Activated CD4-positive, alpha-beta memory T cell treated with anti-CD3 and anti-CD28 coated beads for 36 hours (primary cell): ENCODE measurements at regions of chr1 and their contacts with region 1.

Region 1: DNA sequence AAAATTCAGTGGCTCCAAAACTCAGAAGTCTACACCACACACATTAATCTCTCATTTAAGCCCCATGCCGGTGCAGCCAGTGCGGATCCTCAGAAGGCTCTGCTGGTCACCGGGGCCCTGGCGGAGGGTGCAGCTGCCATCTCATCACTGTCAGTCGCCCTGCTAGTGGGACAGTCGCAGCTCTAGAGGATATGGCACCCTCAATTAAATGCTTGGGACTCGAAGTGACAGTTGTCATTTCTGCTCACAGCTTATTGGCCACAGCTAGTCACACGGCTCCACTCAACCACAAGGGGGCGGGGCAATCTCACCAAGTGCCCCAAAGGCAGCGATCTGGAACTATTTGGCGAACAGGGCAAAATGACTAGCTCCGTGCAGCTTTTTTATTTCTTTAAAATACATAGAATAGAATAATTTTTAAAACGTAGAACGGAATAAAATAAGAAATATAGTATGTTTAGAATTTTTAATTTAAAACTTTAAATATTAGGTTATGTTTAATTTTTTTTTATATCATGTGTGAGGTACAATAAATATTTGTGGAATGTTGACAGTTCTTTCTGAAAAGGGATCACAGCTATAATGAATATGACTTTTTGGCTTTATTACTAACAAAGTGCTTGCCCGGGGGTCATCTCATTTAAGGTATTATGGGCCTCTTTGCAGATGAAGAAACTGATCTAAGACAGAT is 8.0 kb upstream of the MAN1C1 start:
- DNase-seq: peak; percentile 93
- H3K4me3 Mint-ChIP-seq: no peak overlapping the region
- H3K27ac Mint-ChIP-seq: no peak overlapping the region
- H3K4me1 Mint-ChIP-seq: peaks cover 6% of the 10 kb centered on the region
- H3K27me3 Mint-ChIP-seq: peaks cover 1% of the 10 kb centered on the region

Region 2: GRCh38 chr1:25435397-25436108 is 173.1 kb before region 1 on chr1:
- CTCF ChIA-PET with region 1: no interaction called
- POLR2A ChIA-PET with region 1: no interaction called
- intact Hi-C with region 1: no loop called
- DNase-seq: peak; percentile 13
- H3K4me3 Mint-ChIP-seq: peak overlapping the region; percentile 51
- H3K27ac Mint-ChIP-seq: peak overlapping the region; percentile 57
- H3K4me1 Mint-ChIP-seq: peaks cover 53% of the 10 kb centered on the region
- H3K27me3 Mint-ChIP-seq: no peaks in the 10 kb centered on the region

Region 3: DNA sequence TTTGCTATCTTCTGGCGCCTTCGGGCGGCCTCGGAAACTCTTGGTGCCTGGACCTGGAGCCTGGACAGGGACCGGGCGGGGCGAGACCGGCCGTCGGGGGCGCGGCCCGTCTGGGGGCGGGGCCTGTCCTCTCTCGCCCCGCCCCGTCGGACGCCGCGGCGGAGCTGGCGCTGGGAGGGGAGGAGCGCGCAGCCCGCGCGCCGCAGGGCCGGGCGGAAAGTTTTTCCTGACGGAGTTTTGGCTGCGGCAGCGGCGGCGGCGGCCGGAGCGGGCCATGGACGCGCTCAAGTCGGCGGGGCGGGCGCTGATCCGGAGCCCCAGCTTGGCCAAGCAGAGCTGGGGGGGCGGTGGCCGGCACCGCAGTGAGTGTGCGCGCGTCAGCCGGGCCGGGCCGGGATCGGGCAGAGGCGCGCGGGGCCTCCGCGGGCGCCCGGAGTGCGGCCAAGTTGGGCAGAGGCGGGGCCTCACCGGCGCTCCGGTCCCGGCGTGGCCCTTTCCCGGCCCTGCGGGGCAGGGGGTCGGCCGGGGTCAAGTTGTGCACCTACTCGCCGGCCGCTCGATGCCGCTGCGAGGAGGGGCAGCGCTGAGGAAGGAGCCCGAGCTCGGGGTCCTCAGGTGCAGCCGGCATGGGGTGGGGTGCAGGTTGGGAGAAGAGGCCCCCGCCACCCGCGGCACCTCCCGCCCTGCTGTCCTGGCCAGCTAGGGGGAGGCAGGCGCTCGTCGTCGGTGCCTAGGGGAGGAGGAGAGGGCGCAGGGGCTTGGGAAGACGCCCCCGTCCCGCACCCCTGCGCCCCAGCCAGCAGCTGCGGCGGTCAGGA is 65.0 kb before region 1 on chr1 and contains the start of gene LDLRAP1:
- CTCF ChIA-PET with region 1: no interaction called
- POLR2A ChIA-PET with region 1: no interaction called
- intact Hi-C with region 1: loop called (anchors 5 kb)
- DNase-seq: peak; percentile 75
- H3K4me3 Mint-ChIP-seq: peak within 1 kb of the TSS; percentile 81
- H3K27ac Mint-ChIP-seq: peak within 1 kb of the TSS; percentile 64
- H3K4me1 Mint-ChIP-seq: peaks cover 35% of the 10 kb centered on the region
- H3K27me3 Mint-ChIP-seq: no peaks in the 10 kb centered on the region
- total RNA-seq, gene LDLRAP1: 11.9 to 14.8 TPM

Region 4: GRCh38 chr1:25572708-25573600 is 35.7 kb before region 1 on chr1:
- CTCF ChIA-PET with region 1: interaction called, 18 read pairs
- POLR2A ChIA-PET with region 1: no interaction called
- intact Hi-C with region 1: no loop called
- DNase-seq: peak; percentile 66
- H3K4me3 Mint-ChIP-seq: no peak overlapping the region
- H3K27ac Mint-ChIP-seq: no peak overlapping the region
- H3K4me1 Mint-ChIP-seq: peaks cover 23% of the 10 kb centered on the region
- H3K27me3 Mint-ChIP-seq: no peaks in the 10 kb centered on the region

Region 5: GRCh38 chr1:25695090-25695770 is 86.6 kb after region 1 on chr1:
- CTCF ChIA-PET with region 1: interaction called, 11 read pairs
- POLR2A ChIA-PET with region 1: no interaction called
- intact Hi-C with region 1: no loop called
- DNase-seq: no peak
- H3K4me3 Mint-ChIP-seq: no peak overlapping the region
- H3K27ac Mint-ChIP-seq: peak overlapping the region; percentile 59
- H3K4me1 Mint-ChIP-seq: peaks cover 45% of the 10 kb centered on the region
- H3K27me3 Mint-ChIP-seq: no peaks in the 10 kb centered on the region

Region 6: DNA sequence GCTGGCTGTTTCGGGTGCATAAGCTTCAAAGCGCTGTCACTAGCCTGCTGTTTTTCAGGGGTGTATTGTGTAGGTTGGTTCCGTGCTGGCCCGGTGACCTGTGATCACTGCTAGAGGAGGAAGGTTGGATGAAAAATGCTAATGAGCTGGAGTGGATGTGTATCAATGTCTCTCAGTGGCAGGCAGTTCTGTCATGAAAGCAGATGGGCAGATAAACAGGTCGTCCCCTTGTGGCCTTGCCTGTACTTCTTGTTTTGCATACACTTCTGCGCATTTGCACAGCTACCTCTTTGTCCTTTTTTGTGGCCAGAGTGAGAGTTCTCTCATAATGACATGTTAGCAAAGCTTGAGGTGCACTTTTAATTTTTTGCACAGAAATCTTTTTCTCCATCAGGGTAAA is 194.3 kb after region 1 on chr1:
- CTCF ChIA-PET with region 1: interaction called, 21 read pairs
- POLR2A ChIA-PET with region 1: no interaction called
- intact Hi-C with region 1: no loop called
- DNase-seq: peak; percentile 43
- H3K4me3 Mint-ChIP-seq: no peak overlapping the region
- H3K27ac Mint-ChIP-seq: peak overlapping the region; percentile 14
- H3K4me1 Mint-ChIP-seq: peaks cover 43% of the 10 kb centered on the region
- H3K27me3 Mint-ChIP-seq: no peaks in the 10 kb centered on the region

Region 7: DNA sequence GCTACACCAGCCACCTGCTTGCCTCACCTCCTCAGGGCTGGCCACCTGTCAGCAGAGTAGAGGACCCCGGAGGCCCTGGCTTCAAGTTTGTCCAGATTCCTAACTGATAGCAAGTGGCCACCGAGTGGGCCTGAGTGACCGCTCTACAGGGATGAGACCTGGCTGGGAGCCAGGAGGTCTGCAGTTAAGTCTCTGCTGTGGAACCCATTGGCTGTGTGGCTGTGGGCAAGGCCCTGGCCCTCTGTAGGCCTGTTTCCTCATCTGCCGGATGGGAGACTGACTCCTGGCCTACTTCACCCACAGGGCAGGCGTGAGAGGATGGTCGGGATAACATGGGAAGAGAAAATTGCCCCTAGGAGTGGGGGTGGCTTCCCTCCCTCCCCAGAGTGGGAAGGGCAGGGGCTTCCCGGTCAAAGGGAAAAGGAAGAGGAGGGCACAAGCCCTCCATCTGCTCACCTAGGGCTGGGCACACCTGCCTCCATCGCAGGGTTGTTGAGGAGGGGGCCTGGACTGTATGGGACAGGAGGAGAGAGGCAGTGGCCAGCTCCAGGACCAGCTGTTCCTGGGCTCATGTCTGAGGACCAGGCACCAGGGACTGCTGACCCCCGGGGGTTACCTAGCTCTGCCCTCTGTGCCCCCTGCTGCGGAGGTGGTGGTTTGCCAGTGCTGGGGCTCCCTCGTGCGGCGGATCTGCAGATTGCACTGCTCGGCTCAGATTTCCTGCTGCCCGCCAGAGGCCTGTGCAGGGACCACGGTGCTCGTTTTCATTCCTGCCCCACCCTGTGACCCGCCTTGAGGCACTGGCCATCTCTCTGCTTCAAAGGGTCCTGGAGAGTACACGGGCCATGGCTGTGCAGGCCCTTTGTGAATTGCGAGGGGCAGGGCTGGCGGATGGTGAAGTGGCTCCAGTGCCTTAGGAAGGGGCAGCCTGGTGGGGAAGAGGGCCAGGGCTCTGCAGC is 202.0 kb after region 1 on chr1:
- CTCF ChIA-PET with region 1: interaction called, 19 read pairs
- POLR2A ChIA-PET with region 1: no interaction called
- intact Hi-C with region 1: no loop called
- DNase-seq: peak; percentile 85
- H3K4me3 Mint-ChIP-seq: no peak overlapping the region
- H3K27ac Mint-ChIP-seq: no peak overlapping the region
- H3K4me1 Mint-ChIP-seq: peaks cover 2% of the 10 kb centered on the region
- H3K27me3 Mint-ChIP-seq: no peaks in the 10 kb centered on the region